ENCODE measurements at regions of chr7 and their contacts with region 1.

Region 1: DNA sequence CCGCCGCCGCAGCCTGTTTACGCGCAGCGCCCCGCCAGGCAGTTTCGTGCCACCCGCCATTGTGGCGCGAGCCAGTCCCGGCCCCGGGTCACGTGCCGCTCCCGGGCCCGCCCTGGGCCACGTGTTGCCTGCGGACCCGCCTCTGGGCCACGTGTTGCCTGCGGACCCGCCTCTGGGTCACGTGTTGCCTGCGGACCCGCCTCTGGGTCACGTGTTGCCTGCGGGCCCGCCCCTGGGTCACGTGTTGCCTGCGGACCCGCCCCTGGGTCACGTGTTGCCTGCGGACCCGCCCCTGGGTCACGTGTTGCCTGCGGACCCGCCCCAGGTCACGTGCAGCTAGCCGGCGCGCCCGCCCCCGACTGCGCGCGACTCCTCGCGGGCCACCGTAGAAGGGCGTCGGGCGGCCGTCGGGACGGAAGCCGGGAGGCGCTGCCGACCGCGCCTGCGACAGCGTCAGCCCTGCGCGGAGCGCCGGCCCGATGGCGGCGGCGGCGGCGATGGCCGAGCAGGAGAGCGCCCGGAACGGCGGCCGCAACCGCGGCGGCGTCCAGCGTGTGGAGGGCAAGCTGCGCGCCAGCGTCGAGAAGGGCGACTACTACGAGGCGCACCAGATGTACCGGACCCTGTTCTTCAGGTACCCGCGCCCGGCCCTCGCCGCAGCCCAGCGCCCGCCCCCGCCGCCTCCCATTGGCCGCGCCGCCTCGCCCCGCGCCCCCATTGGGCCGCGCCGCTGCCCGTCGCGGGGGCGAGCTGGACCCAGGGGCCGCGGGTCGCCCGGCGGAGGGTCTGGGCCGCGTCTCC is at the start of gene GET4:
- DNase-seq: peak; percentile 92 to 96 (median 96)
- H3K4me3 ChIP-seq: peak within 1 kb of the TSS; percentile 67 to 94 (median 78)
- H3K4me3 Mint-ChIP-seq: peak within 1 kb of the TSS; percentile 94 to 96
- H3K27ac ChIP-seq: peak within 1 kb of the TSS; percentile 60 to 80
- H3K27ac Mint-ChIP-seq: peak within 1 kb of the TSS; percentile 78 to 99 (median 91)
- H3K4me1 ChIP-seq: peaks cover 30 to 44% of the 10 kb centered on the region in 2 donors
- H3K4me1 Mint-ChIP-seq: peaks cover 24% of the 10 kb centered on the region
- H3K27me3 ChIP-seq: no peaks in the 10 kb centered on the region
- H3K27me3 Mint-ChIP-seq: peaks cover 0 to 3% (median 0%) of the 10 kb centered on the region in 3 donors
- CTCF ChIP-seq: peak; percentile 14
- polyA plus RNA-seq, gene GET4: 20.1 to 36.8 (median 25.5) TPM

Region 2: DNA sequence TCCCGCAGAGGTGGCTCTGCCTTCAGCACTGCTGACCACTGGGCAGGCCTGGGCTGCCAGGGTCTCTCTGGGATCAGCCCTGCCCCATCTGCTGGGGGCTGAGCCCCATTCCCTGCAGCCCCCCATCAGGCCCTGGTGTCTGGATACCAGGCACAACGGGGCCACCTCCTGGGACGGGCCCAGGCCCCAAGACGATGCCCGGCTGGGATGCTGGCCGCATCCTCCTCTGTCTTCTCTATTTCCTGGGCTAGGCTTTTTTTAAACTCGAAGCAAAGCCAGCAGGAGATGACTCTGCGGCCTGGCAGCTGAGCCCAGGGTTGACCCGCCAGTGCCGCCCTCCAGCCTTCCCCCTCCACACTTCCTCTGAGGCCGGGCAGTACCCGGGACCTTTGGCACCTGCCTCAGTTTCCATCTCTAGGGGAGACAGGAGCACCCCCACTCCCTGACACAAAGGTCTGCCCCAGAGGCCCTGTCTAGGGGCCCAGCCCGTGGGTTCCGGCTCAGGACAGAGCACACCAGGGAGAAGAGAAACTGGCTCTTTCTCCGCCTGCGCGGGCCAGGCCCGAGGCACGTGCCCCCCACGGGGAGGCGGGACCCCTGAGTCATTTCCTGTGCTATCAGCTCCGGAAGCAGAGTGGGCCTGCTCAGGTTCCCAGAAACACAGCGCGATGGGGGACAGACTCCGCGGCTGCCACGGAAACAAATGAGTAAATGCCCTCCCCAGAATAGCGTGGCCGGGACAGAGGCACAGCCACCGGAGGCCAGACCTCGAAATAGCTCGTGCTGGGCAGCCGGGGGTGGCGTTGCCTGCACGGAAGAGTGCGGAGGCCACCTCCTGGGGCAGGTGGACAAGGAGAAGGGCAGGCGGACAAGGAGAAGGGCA is 272.1 kb before region 1 on chr7:
- intact Hi-C with region 1: loop called in 1 of 2 experiments (anchors 10 kb)
- DNase-seq: peak; percentile 92 to 96 (median 95)
- H3K4me3 ChIP-seq: peak overlapping the region in 2 of 3 experiments; percentile 32 to 41
- H3K4me3 Mint-ChIP-seq: peak overlapping the region; percentile 69 to 88
- H3K27ac ChIP-seq: peak overlapping the region; percentile 96 to 97
- H3K27ac Mint-ChIP-seq: peak overlapping the region; percentile 97 to 99 (median 98)
- H3K4me1 ChIP-seq: peaks cover 46 to 58% of the 10 kb centered on the region in 2 donors
- H3K4me1 Mint-ChIP-seq: peaks cover 50% of the 10 kb centered on the region
- H3K27me3 ChIP-seq: no peaks in the 10 kb centered on the region
- H3K27me3 Mint-ChIP-seq: peaks cover 1 to 8% (median 2%) of the 10 kb centered on the region in 3 donors
- CTCF ChIP-seq: no peak

Region 3: DNA sequence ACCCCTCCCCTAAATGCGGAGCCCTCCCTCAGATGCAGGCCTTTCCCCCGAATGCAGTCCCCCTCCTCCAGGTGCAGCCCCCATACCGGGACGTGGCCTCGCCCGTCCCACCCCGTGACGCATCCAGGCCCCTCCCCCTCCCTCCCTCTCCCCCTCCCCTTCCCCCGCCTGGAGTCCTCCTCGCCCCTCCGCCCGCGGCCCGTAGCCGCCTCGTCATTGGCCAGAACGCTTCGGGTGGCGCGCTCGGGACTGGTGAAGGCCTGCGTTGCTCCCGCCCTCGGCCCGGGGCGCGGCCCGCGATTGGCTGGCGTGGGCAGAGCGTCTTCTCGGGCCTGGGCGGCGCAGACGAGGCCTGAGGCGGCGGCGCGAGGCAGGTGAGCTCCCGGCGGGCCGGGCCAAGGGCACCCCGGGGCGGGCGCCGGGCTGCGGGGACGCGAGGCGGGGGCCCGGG is 60.0 kb before region 1 on chr7:
- intact Hi-C with region 1: loop called (anchors 5 kb)
- DNase-seq: peak; percentile 90 to 92 (median 91)
- H3K4me3 ChIP-seq: peak overlapping the region; percentile 20 to 82 (median 42)
- H3K4me3 Mint-ChIP-seq: peak overlapping the region; percentile 65 to 71
- H3K27ac ChIP-seq: peak overlapping the region in 1 of 2 donors; percentile 48
- H3K27ac Mint-ChIP-seq: peak overlapping the region in 2 of 7 donors; percentile 58 to 82
- H3K4me1 ChIP-seq: peaks cover 45 to 59% of the 10 kb centered on the region in 2 donors
- H3K4me1 Mint-ChIP-seq: peaks cover 58% of the 10 kb centered on the region
- H3K27me3 ChIP-seq: peaks cover 2 to 26% of the 10 kb centered on the region in 2 donors
- H3K27me3 Mint-ChIP-seq: peaks cover 35 to 56% (median 37%) of the 10 kb centered on the region in 3 donors
- CTCF ChIP-seq: no peak

Region 4: DNA sequence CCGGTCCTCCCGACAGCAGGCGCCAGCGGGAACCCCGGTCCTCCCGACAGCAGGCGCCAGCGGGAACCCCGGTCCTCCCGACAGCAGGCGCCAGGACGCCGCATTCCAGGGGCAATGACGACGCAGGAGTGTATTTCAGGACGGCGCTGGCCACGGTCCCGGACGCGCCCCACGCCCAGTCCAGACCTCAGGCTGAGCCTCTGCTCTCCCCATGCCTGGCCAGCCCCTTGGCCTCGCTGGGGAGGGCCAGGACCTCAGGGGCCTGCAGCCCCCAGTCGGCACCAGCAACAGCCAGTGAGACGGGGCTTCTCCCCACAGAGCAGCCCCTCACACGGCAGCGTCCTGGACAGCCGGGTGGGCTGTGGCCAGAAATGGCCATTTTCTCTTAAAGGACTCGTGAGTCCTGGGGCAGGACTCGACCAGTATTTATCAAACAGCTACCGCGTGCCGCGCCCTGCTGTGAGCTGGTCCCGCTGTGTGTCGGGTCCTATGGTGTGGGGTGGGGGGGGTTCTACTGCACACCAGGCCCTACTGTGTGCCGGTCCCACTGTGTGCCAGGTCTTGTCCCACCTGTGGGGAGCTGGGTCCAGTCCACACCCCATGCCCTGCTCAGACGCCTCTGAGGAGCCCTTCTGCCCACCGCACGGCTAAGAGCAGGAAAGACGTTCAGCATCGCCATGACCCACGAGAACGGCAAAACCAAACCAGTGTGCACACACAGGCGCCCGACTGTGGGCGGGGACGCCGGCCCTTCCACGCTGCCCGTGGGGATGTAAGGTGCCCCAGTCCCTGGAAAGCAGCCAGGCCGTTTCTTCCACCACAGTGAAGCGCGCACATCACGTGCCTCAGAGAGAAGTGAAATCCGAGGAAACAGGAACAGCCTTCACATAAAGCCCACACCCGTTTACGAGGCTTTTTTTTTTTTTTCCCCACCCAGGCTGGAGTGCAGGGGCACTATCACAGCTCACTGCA is 33.3 kb after region 1 on chr7:
- intact Hi-C with region 1: no loop called
- DNase-seq: peak; percentile 97 to 99 (median 98)
- H3K4me3 ChIP-seq: peak overlapping the region; percentile 38 to 78 (median 54)
- H3K4me3 Mint-ChIP-seq: peak overlapping the region; percentile 72 to 78
- H3K27ac ChIP-seq: peak overlapping the region; percentile 84 to 99
- H3K27ac Mint-ChIP-seq: peak overlapping the region; percentile 92 to 97 (median 96)
- H3K4me1 ChIP-seq: peaks cover 74 to 79% of the 10 kb centered on the region in 2 donors
- H3K4me1 Mint-ChIP-seq: peaks cover 50% of the 10 kb centered on the region
- H3K27me3 ChIP-seq: no peaks in the 10 kb centered on the region
- H3K27me3 Mint-ChIP-seq: no peaks in the 10 kb centered on the region
- CTCF ChIP-seq: peak; percentile 42

Region 5: GRCh38 chr7:1065263-1066260 is 189.2 kb after region 1 on chr7:
- intact Hi-C with region 1: loop called in 1 of 2 experiments (anchors 10 kb)
- DNase-seq: peak; percentile 69 to 77 (median 74)
- H3K4me3 ChIP-seq: no peak overlapping the region
- H3K4me3 Mint-ChIP-seq: peak overlapping the region in 1 of 2 donors; percentile 82
- H3K27ac ChIP-seq: no peak overlapping the region
- H3K27ac Mint-ChIP-seq: no peak overlapping the region
- H3K4me1 ChIP-seq: peaks cover 28 to 33% of the 10 kb centered on the region in 2 donors
- H3K4me1 Mint-ChIP-seq: peaks cover 31% of the 10 kb centered on the region
- H3K27me3 ChIP-seq: peaks cover 0 to 32% of the 10 kb centered on the region in 2 donors
- H3K27me3 Mint-ChIP-seq: peaks cover 26 to 37% (median 28%) of the 10 kb centered on the region in 3 donors
- CTCF ChIP-seq: peak; percentile 95

Measured in CD14-positive monocyte (primary cell).